ENCODE measurements at regions of chr15 and their contacts with region 1.

Region 1: DNA sequence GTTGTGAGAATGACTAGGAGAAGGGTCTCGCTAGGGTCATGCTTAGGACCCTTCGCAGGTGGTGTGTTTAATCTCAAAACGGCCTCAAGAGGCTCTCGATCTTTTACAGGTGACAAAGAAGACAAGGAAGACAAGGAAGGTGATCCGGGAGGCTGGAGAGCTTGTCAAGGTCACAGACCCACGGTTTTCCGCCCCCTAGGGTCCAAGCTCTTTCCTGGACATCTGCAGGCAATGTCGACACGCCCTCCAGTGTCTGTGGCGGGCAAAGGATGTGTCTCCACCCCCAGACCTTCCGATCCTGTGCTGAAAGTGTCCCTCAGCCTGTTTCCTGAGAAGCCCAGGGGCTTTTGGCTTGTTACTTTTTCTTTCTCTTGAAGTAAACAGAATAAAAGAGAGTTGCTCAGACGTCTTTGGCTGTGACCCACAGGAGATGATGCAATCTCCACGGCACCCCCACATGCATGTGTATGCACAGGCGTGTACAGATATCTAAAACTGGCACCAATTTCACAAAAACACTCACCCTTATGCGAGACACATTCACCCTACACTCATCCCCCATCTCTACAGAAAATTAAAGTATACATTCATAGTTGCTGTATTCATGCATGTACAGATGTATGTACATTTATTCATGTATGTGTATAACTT is 108.8 kb downstream of the KLF13 start:
- DNase-seq: peak; percentile 82
- ATAC-seq: peak; percentile 87
- H3K4me3 Mint-ChIP-seq: no peak overlapping the region
- H3K27ac Mint-ChIP-seq: no peak overlapping the region
- H3K4me1 Mint-ChIP-seq: peaks cover 18% of the 10 kb centered on the region
- H3K27me3 Mint-ChIP-seq: peaks cover 8% of the 10 kb centered on the region
- CTCF ChIP-seq: 0 out of 2 replicates have a peak, but pooled peaks have one; percentile 27

Region 2: GRCh38 chr15:31215490-31216214 is 219.7 kb before region 1 on chr15:
- CTCF ChIA-PET with region 1: interaction called, 27 read pairs
- POLR2A ChIA-PET with region 1: no interaction called
- DNase-seq: peak; percentile 87
- ATAC-seq: peak; percentile 76
- H3K4me3 Mint-ChIP-seq: peak overlapping the region; percentile 58
- H3K27ac Mint-ChIP-seq: no peak overlapping the region
- H3K4me1 Mint-ChIP-seq: peaks cover 12% of the 10 kb centered on the region
- H3K27me3 Mint-ChIP-seq: peaks cover 6% of the 10 kb centered on the region
- CTCF ChIP-seq: peak; percentile 69

Region 3: GRCh38 chr15:31302778-31303725 is 132.3 kb before region 1 on chr15:
- CTCF ChIA-PET with region 1: interaction called, 16 read pairs
- POLR2A ChIA-PET with region 1: interaction called, 3 read pairs
- DNase-seq: peak; percentile 48
- ATAC-seq: peak; percentile 23
- H3K4me3 Mint-ChIP-seq: no peak overlapping the region
- H3K27ac Mint-ChIP-seq: no peak overlapping the region
- H3K4me1 Mint-ChIP-seq: peaks cover 51% of the 10 kb centered on the region
- H3K27me3 Mint-ChIP-seq: peaks cover 5% of the 10 kb centered on the region
- CTCF ChIP-seq: no peak

Region 4: DNA sequence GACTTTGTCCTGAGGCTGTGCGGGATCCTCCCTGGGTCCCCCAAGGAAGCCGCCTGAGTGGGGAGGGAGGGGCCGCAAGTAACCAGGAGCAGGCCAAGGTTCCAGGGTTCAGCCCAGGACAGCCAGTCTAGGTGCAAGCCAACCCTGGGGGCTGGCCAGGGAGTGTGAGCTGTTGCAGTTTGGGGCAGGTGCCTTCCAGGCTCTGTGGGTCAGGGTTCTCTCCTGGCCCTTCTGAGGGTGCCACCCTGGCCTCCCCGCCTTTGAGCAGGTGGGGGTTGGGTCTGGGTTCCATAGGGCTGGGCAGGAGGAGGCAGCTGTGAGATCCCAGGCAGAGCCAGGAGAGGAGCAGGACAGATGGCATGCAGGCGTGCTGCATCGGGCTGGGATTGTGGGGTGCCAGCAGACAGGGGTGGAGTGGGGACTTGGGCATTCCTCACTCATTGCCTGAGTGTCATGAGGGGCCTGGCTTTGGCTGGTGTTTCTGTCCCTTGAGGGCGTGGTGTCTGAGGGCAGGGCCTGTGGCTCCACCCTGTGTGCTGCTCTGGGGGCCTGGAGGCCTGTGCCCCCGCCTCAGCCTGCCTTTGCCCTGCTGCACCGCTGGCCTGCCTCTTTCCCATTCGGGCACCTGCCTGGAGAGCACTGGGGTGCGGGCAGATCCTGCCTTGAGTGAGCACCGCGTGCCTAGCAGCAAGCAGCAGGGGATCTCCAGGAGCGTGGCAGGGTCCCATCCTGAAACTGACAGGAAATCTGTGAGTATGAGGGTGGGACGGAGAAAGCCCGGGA is 90.4 kb before region 1 on chr15:
- CTCF ChIA-PET with region 1: interaction called, 12 read pairs
- POLR2A ChIA-PET with region 1: no interaction called
- DNase-seq: no peak
- ATAC-seq: no peak
- H3K4me3 Mint-ChIP-seq: no peak overlapping the region
- H3K27ac Mint-ChIP-seq: no peak overlapping the region
- H3K4me1 Mint-ChIP-seq: peaks cover 42% of the 10 kb centered on the region
- H3K27me3 Mint-ChIP-seq: no peaks in the 10 kb centered on the region
- CTCF ChIP-seq: no peak

Region 5: GRCh38 chr15:31391687-31392671 is 43.4 kb before region 1 on chr15:
- CTCF ChIA-PET with region 1: interaction called, 16 read pairs
- POLR2A ChIA-PET with region 1: no interaction called
- DNase-seq: peak; percentile 71
- ATAC-seq: peak; percentile 56
- H3K4me3 Mint-ChIP-seq: peak overlapping the region; percentile 83
- H3K27ac Mint-ChIP-seq: no peak overlapping the region
- H3K4me1 Mint-ChIP-seq: peaks cover 21% of the 10 kb centered on the region
- H3K27me3 Mint-ChIP-seq: peaks cover 35% of the 10 kb centered on the region
- CTCF ChIP-seq: no peak

Region 6: GRCh38 chr15:31483053-31483985 is 47.9 kb after region 1 on chr15:
- CTCF ChIA-PET with region 1: interaction called, 99 read pairs
- POLR2A ChIA-PET with region 1: no interaction called
- DNase-seq: peak; percentile 52
- ATAC-seq: peak; percentile 66
- H3K4me3 Mint-ChIP-seq: peak overlapping the region; percentile 67
- H3K27ac Mint-ChIP-seq: no peak overlapping the region
- H3K4me1 Mint-ChIP-seq: peaks cover 6% of the 10 kb centered on the region
- H3K27me3 Mint-ChIP-seq: peaks cover 50% of the 10 kb centered on the region
- CTCF ChIP-seq: no peak

Region 7: DNA sequence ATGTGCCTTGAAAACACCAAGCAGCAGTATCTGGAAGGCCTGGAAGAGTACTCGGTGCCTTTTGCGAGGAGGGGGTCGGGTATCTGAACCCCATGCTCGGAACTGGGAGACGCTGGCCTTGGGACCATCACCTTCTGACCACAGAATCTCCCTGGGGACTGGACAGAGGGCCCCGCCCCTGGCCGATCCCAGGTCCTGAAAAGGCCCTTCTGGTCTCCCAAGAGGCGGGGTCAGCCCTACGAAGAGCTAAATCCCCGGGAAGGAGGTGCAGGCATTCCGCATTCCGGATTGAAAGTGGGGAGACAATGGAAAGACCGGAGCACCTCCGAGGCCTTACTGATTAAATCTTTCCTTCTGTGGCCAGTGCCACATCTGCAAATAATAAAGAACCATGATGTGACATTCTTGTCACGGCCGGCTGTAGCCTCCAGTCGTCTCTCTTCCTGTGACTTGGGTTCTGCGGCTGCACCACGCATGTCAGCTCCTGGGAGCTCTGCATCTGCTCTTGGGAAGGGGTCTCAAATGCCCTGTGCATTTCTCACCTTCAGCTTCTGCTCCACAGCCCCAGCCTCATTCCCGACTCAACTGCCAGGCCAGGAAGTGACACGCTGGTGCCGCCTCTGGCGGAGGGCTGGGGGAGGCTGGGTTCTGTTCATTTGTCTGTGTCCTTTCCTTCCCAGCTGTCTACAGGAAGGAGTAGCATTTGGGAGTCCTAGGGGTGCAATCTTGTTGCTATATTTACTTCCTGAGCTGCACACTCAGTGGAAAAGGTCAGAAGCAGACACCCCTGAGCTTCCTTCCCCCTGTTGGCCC is 64.8 kb after region 1 on chr15:
- CTCF ChIA-PET with region 1: no interaction called
- POLR2A ChIA-PET with region 1: no interaction called
- DNase-seq: no peak
- ATAC-seq: no peak
- H3K4me3 Mint-ChIP-seq: no peak overlapping the region
- H3K27ac Mint-ChIP-seq: no peak overlapping the region; the same call in 1 of the 2 replicates
- H3K4me1 Mint-ChIP-seq: peaks cover 3% of the 10 kb centered on the region; the same call in 1 of the 2 replicates
- H3K27me3 Mint-ChIP-seq: no peaks in the 10 kb centered on the region; the same call in 1 of the 2 replicates
- CTCF ChIP-seq: no peak

Measured in WTC11 (cell line).